B cell (primary cell): ENCODE measurements at regions of chr22 and their contacts with region 1.

Region 1: GRCh38 chr22:39073941-39074340 is 3.1 kb upstream of the APOBEC3G start:
- DNase-seq: no peak
- ATAC-seq: no peak
- H3K4me3 ChIP-seq: no peak overlapping the region
- H3K4me3 Mint-ChIP-seq: peak overlapping the region; percentile 64
- H3K27ac ChIP-seq: peak overlapping the region; percentile 88 to 89
- H3K27ac Mint-ChIP-seq: peak overlapping the region; percentile 92
- H3K4me1 ChIP-seq: peaks cover 60 to 83% of the 10 kb centered on the region in 2 donors
- H3K4me1 Mint-ChIP-seq: peaks cover 61% of the 10 kb centered on the region
- H3K27me3 ChIP-seq: no peaks in the 10 kb centered on the region
- H3K27me3 Mint-ChIP-seq: no peaks in the 10 kb centered on the region
- CTCF ChIP-seq: no peak

Region 2: DNA sequence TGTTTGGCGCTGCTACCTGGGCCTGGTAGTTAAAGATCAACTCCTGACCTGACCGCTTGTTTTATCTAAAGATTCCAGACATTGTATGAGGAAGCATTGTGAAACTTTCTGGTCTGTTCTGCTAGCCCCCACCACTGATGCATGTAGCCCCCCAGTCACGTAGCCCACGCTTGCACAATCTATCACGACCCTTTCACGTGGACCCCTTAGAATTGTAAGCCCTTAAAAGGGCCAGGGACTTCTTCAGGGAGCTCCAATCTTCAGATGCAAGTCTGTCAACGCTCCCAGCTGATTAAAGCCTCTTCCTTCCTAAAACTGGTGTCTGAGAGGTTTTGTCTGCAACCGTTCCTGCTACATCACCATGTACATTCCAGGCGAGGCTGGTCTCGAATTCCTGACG is 18.3 kb before region 1 on chr22:
- CTCF ChIA-PET with region 1: no interaction called
- POLR2A ChIA-PET with region 1: interaction called, 7 read pairs
- intact Hi-C with region 1: loop called (anchors 2 kb)
- DNase-seq: no peak
- ATAC-seq: no peak
- H3K4me3 ChIP-seq: no peak overlapping the region
- H3K4me3 Mint-ChIP-seq: no peak overlapping the region
- H3K27ac ChIP-seq: peak overlapping the region in 1 of 2 donors; percentile 52
- H3K27ac Mint-ChIP-seq: peak overlapping the region; percentile 15
- H3K4me1 ChIP-seq: peaks cover 43 to 52% of the 10 kb centered on the region in 2 donors
- H3K4me1 Mint-ChIP-seq: peaks cover 28% of the 10 kb centered on the region
- H3K27me3 ChIP-seq: no peaks in the 10 kb centered on the region
- H3K27me3 Mint-ChIP-seq: no peaks in the 10 kb centered on the region
- CTCF ChIP-seq: no peak

Region 3: DNA sequence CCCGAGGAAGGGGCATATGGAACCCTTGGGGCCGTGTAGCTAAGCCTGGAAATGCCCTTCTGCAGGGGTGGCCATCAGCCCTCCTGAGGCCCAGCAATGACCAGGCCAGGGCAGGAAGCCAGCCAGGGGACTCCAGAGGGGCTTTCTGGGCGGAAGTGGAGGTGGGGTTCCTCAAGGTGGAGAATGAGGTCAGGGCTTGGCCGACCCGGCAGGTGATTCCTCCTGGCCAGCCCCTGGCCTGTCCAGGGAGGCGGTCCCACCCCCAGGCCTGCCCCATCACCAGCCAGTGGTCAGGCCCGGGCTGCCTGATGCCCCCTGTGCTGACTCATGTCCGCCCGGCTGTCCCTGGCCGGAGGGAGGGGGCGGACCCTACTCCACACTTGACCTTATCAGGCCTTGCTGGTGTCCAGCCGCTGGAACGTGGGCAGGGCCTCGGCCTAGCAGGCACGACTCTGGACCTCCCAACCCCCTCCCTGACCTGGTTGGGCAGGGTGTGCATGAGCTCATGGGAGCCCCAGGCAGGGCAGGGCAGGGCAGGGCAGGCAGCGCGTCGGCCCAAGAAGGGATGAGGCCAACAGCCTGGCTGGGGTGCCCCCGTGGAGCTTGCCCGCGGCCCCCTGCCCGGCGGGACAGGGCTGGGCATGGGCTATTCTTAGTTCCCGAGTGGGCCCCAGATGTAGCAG is 209.5 kb after region 1 on chr22:
- CTCF ChIA-PET with region 1: no interaction called
- POLR2A ChIA-PET with region 1: no interaction called
- intact Hi-C with region 1: no loop called
- DNase-seq: no peak
- ATAC-seq: no peak
- H3K4me3 ChIP-seq: no peak overlapping the region
- H3K4me3 Mint-ChIP-seq: no peak overlapping the region
- H3K27ac ChIP-seq: no peak overlapping the region
- H3K27ac Mint-ChIP-seq: no peak overlapping the region
- H3K4me1 ChIP-seq: peaks cover 13 to 19% of the 10 kb centered on the region in 2 donors
- H3K4me1 Mint-ChIP-seq: peaks cover 12% of the 10 kb centered on the region
- H3K27me3 ChIP-seq: peaks cover 0 to 24% (median 6%) of the 10 kb centered on the region in 4 experiments
- H3K27me3 Mint-ChIP-seq: peaks cover 18% of the 10 kb centered on the region
- CTCF ChIP-seq: no peak